ENCODE measurements at regions of chr3 and their contacts with region 1.

Region 1: DNA sequence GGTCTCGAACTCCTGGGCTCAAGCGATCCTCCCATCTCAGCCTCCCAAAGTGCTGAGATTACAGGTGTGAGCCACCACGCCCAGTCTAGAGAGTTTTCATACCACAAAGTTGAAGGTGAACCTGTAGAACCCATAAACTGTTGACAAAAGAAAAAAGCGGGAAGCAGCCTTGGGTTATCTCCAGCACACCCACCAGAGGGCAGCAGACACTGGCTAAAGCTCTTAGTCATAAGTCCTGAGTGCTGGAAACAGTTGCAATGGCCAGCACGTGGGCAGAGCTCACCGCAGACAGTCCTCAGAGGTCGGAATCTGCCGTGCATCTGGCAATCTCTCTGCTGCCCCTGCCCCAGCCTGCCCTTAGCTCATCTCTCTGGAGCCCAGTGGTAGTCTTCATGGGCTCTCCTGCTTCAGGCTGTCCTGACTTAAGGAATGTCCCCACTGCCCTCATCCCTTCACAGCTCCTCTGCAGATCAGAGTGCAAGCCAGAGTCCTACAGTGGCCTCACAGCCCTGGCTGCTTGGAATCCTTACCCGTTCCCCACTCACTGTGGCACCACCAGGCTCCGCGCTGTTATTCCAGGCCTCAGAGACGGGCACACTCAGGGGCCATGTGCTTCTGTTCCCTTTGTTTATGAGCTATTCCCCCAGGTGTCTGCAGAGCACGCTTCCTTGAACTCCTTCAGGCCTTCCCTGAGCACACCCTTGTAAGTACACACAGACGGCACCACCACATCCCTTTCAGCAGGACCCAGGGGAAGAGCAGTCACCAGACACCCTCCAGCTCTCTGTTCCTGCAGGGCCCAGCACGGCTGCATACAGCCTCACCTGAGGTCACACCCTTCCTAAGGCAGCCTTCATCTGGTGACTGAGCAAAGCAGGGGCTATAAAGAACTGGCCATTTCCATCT is 8.8 kb upstream of the ELP6 start:
- DNase-seq: peak; percentile 85
- ATAC-seq: peak; percentile 84
- H3K4me3 Mint-ChIP-seq: no peak overlapping the region
- H3K27ac Mint-ChIP-seq: no peak overlapping the region
- H3K4me1 Mint-ChIP-seq: peaks cover 19% of the 10 kb centered on the region
- H3K27me3 Mint-ChIP-seq: peaks cover 19% of the 10 kb centered on the region
- CTCF ChIP-seq: peak; percentile 91

Region 2: GRCh38 chr3:47420511-47421484 is 101.5 kb before region 1 on chr3:
- CTCF ChIA-PET with region 1: interaction called, 20 read pairs
- POLR2A ChIA-PET with region 1: no interaction called
- DNase-seq: peak; percentile 95
- ATAC-seq: peak; percentile 85
- H3K4me3 Mint-ChIP-seq: no peak overlapping the region
- H3K27ac Mint-ChIP-seq: peak overlapping the region; percentile 93
- H3K4me1 Mint-ChIP-seq: peaks cover 8% of the 10 kb centered on the region
- H3K27me3 Mint-ChIP-seq: no peaks in the 10 kb centered on the region
- CTCF ChIP-seq: peak; percentile 95

Region 3: GRCh38 chr3:47553407-47553806 is 31.1 kb after region 1 on chr3:
- CTCF ChIA-PET with region 1: interaction called, 11 read pairs
- POLR2A ChIA-PET with region 1: no interaction called
- DNase-seq: no peak
- ATAC-seq: no peak
- H3K4me3 Mint-ChIP-seq: no peak overlapping the region
- H3K27ac Mint-ChIP-seq: no peak overlapping the region
- H3K4me1 Mint-ChIP-seq: no peaks in the 10 kb centered on the region
- H3K27me3 Mint-ChIP-seq: peaks cover 5% of the 10 kb centered on the region
- CTCF ChIP-seq: no peak

Region 4: DNA sequence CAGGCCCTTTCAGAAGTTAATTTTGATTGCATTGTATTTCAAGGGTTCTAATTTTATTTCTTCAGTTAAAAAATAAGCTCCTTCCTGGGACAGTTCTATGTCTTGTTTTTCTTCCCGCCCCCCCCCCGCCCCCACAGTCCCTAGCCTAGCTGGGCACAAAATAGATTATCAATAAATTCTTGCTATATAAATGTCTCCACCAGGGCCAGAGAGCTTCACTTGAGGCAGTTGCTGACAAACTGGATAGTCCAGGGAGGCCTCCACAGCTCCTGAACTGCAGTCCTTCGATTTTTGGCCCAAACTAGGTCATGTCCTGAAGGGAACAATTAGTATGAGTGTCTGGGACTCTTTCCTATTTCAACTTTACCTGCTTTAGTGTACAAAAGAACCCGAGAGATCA is 66.3 kb after region 1 on chr3:
- CTCF ChIA-PET with region 1: interaction called, 11 read pairs
- POLR2A ChIA-PET with region 1: no interaction called
- DNase-seq: no peak
- ATAC-seq: no peak
- H3K4me3 Mint-ChIP-seq: no peak overlapping the region
- H3K27ac Mint-ChIP-seq: no peak overlapping the region
- H3K4me1 Mint-ChIP-seq: peaks cover 11% of the 10 kb centered on the region
- H3K27me3 Mint-ChIP-seq: no peaks in the 10 kb centered on the region
- CTCF ChIP-seq: no peak

Region 5: GRCh38 chr3:47824541-47825473 is 302.5 kb after region 1 on chr3:
- CTCF ChIA-PET with region 1: interaction called, 17 read pairs
- POLR2A ChIA-PET with region 1: no interaction called
- DNase-seq: peak; percentile 82
- ATAC-seq: peak; percentile 99
- H3K4me3 Mint-ChIP-seq: peak overlapping the region; percentile 94
- H3K27ac Mint-ChIP-seq: peak overlapping the region; percentile 91
- H3K4me1 Mint-ChIP-seq: peaks cover 11% of the 10 kb centered on the region
- H3K27me3 Mint-ChIP-seq: no peaks in the 10 kb centered on the region
- CTCF ChIP-seq: peak; percentile 41; the same call in 1 of the 2 replicates

Measured in WTC11 (cell line).